Transverse colon (tissue), 4 donors: ENCODE measurements at regions of chr17 and their contacts with region 1.

Region 1: DNA sequence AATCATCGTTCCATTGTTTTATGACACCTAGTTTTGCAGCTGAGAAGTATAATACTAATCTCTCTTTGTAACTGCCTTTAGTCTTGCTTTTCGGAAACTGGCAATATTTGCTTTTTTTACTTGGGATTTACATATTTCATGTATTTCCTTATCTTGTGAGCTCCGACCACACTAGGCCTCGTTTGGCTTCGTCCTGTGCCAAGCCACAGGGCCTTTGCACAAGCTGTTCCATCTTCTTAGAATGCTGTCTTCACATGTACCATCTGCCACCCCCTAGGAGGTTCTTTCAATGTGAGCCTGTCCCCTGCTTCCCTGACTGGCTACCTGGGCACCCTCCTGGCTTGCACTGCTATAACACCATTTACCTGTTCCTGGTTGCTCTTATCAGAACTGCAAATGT is 77.2 kb downstream of the SHISA6 start:
- DNase-seq: no peak
- H3K4me3 ChIP-seq: no peak overlapping the region
- H3K27ac ChIP-seq: no peak overlapping the region
- H3K4me1 ChIP-seq: no peaks in the 10 kb centered on the region
- H3K27me3 ChIP-seq: no peaks in the 10 kb centered on the region
- CTCF ChIP-seq: no peak
- EP300 ChIP-seq: no peak
- POLR2A ChIP-seq: no peak

Region 2: GRCh38 chr17:10702574-10702973 is 615.6 kb before region 1 on chr17:
- in situ Hi-C with region 1: loop called in 1 of 4 experiments (anchors 5 kb)
- intact Hi-C with region 1: no loop called
- DNase-seq: no peak
- H3K4me3 ChIP-seq: no peak overlapping the region
- H3K27ac ChIP-seq: no peak overlapping the region
- H3K4me1 ChIP-seq: peaks cover 5 to 15% (median 14%) of the 10 kb centered on the region in 4 donors
- H3K27me3 ChIP-seq: no peaks in the 10 kb centered on the region
- CTCF ChIP-seq: no peak
- EP300 ChIP-seq: no peak
- POLR2A ChIP-seq: no peak